ENCODE measurements at regions of chr1 and their contacts with region 1.

Region 1: GRCh38 chr1:21659099-21659923 is 9.8 kb downstream of the RAP1GAP start:
- DNase-seq: peak; percentile 90
- ATAC-seq: peak; percentile 94
- H3K4me3 Mint-ChIP-seq: peak overlapping the region; percentile 56
- H3K27ac Mint-ChIP-seq: no peak overlapping the region
- H3K4me1 Mint-ChIP-seq: peaks cover 6% of the 10 kb centered on the region
- H3K27me3 Mint-ChIP-seq: peaks cover 22% of the 10 kb centered on the region

Region 2: GRCh38 chr1:21255278-21255942 is 403.9 kb before region 1 on chr1:
- CTCF ChIA-PET with region 1: no interaction called
- POLR2A ChIA-PET with region 1: no interaction called
- intact Hi-C with region 1: loop called in 1 of 2 experiments (anchors 10 kb)
- DNase-seq: peak; percentile 90
- ATAC-seq: peak; percentile 64
- H3K4me3 Mint-ChIP-seq: no peak overlapping the region
- H3K27ac Mint-ChIP-seq: peak overlapping the region; percentile 84
- H3K4me1 Mint-ChIP-seq: peaks cover 48% of the 10 kb centered on the region
- H3K27me3 Mint-ChIP-seq: no peaks in the 10 kb centered on the region

Region 3: DNA sequence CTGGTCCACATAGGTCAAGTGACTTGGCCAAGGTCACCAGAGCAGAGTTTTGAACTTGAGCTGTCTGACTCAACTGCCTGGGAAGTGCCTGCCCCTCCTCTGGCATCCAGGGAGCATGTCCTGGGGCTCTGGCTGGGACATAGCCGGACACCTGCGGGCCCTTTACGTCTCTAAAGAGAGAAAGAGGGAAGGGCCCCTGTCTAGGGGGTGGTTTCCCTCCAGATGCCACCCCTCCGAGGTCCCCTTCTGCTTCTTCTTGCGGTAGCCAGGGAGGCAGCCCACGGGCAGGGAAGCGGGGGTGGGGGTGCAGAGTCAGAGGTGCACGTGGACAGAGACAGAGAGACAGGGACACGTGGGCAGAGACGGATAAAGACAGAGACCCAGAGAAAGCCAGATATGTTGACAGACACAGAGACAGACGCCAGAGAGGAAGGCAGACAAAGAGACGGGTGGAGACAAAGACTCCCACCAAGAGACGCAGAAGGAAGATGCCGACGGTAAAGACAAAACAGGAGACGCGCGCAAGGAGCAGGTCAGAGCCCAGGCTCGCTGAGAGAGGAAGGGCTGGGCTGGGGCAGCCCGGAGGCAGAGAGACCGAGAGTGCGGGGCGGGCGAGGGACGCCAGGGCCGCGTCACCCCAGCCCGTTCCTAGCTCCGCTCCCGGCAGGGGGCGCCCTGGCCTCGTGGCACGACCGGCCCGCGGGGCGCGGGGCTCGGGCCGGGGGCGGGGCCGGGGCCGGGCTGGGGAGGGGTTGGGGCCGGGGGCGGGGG is 150.5 kb before region 1 on chr1:
- CTCF ChIA-PET with region 1: interaction called, 3 read pairs
- POLR2A ChIA-PET with region 1: no interaction called
- intact Hi-C with region 1: loop called (anchors 1 to 5 kb)
- DNase-seq: peak; percentile 86
- ATAC-seq: peak; percentile 97
- H3K4me3 Mint-ChIP-seq: peak overlapping the region; percentile 25
- H3K27ac Mint-ChIP-seq: no peak overlapping the region
- H3K4me1 Mint-ChIP-seq: peaks cover 4% of the 10 kb centered on the region
- H3K27me3 Mint-ChIP-seq: peaks cover 38% of the 10 kb centered on the region

Region 4: DNA sequence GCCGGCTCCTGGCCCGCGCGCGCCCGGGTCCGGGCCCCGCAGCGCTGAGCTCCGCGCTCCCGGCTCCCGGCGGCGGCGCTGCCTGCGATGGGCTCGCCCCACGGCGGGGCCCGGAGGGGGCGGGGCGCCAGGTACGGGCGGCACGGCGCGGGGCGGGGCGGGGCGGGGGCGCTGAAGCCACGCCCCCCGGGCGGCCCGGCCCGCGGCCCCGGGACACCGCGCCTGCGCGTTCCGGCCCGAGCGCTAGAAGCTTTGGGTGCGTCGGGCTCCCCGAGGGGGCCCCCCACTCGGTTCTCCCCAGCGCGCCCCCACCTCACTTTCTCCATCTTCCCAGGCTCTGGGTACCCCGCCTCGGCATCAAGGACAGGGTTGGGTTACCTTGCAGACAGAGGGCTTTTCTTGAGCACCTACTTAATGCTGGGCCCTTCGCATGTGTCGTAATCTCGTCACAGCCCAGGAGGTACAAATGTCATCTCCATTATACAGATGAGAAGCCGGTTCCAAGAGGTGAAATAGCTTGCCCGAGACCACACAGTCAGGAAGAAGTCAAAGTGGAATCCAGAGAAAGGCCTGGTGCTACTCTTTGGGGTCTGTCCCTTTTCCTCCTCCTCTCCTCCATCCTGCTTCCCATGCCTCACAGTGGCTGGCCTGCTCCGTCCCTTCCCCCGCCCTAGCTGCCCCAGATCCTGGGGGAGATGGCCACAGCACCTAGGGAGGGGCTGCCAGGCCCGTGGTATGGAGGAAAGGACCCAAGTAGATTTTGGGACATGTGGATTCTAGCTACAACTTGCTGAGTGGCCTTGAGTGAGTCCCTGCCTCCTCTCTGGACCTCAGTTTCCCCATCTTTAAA is 36.6 kb before region 1 on chr1:
- CTCF ChIA-PET with region 1: no interaction called
- POLR2A ChIA-PET with region 1: no interaction called
- intact Hi-C with region 1: loop called in 1 of 2 experiments (anchors 2 kb)
- DNase-seq: peak; percentile 75
- ATAC-seq: peak; percentile 85
- H3K4me3 Mint-ChIP-seq: peak overlapping the region; percentile 35
- H3K27ac Mint-ChIP-seq: no peak overlapping the region
- H3K4me1 Mint-ChIP-seq: peaks cover 2% of the 10 kb centered on the region
- H3K27me3 Mint-ChIP-seq: peaks cover 21% of the 10 kb centered on the region

Region 5: GRCh38 chr1:21818656-21819055 is 159.3 kb after region 1 on chr1:
- CTCF ChIA-PET with region 1: no interaction called
- POLR2A ChIA-PET with region 1: no interaction called
- intact Hi-C with region 1: loop called in 1 of 2 experiments (anchors 1 kb)
- DNase-seq: peak; percentile 69
- ATAC-seq: peak; percentile 67
- H3K4me3 Mint-ChIP-seq: no peak overlapping the region
- H3K27ac Mint-ChIP-seq: no peak overlapping the region
- H3K4me1 Mint-ChIP-seq: peaks cover 6% of the 10 kb centered on the region
- H3K27me3 Mint-ChIP-seq: peaks cover 6% of the 10 kb centered on the region